A673 (cell line): ENCODE measurements at regions of chr4 and their contacts with region 1.

Region 1: DNA sequence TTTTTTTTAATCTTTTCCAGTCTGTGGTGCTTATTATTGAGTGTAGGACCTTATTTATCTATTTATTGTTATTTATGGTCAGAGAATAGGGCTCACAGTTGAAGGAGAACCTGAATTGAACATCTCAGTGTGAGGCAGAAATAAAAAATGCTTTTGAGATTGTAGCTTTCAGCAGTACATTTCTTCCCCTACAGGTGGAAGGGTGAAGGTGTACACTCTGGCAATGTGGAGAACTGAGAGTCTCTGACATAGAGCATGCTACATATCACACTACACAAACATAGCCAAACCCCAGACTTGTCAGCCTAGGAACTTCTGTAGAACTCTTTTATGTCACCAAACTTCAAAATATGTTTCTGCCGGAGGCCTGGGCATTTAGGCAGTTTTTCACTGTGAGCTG is 140.2 kb downstream of the STIM2 start:
- DNase-seq: no peak
- H3K4me3 ChIP-seq: no peak overlapping the region
- H3K27ac ChIP-seq: no peak overlapping the region
- H3K4me1 ChIP-seq: peaks cover 28% of the 10 kb centered on the region
- H3K27me3 ChIP-seq: no peaks in the 10 kb centered on the region
- CTCF ChIP-seq: peak; percentile 28; the same call in 1 of the 2 replicates

Region 2: GRCh38 chr4:26568446-26568994 is 432.3 kb before region 1 on chr4:
- CTCF ChIA-PET with region 1: no interaction called
- POLR2A ChIA-PET with region 1: no interaction called
- intact Hi-C with region 1: loop called (anchors 10 kb)
- DNase-seq: peak; percentile 96
- H3K4me3 ChIP-seq: no peak overlapping the region
- H3K27ac ChIP-seq: peak overlapping the region; percentile 44
- H3K4me1 ChIP-seq: peaks cover 40% of the 10 kb centered on the region
- H3K27me3 ChIP-seq: no peaks in the 10 kb centered on the region
- CTCF ChIP-seq: no peak

Region 3: GRCh38 chr4:26787461-26788340 is 213.1 kb before region 1 on chr4:
- CTCF ChIA-PET with region 1: no interaction called
- POLR2A ChIA-PET with region 1: no interaction called
- intact Hi-C with region 1: loop called (anchors 5 kb)
- DNase-seq: peak; percentile 85
- H3K4me3 ChIP-seq: no peak overlapping the region
- H3K27ac ChIP-seq: peak overlapping the region; percentile 62
- H3K4me1 ChIP-seq: peaks cover 39% of the 10 kb centered on the region
- H3K27me3 ChIP-seq: no peaks in the 10 kb centered on the region
- CTCF ChIP-seq: peak; percentile 73

Region 4: GRCh38 chr4:26860157-26860921 is 140.5 kb before region 1 on chr4 and contains the start of gene STIM2:
- CTCF ChIA-PET with region 1: no interaction called
- POLR2A ChIA-PET with region 1: no interaction called
- intact Hi-C with region 1: no loop called
- DNase-seq: peak; percentile 99
- H3K4me3 ChIP-seq: peak within 1 kb of the TSS; percentile 85
- H3K27ac ChIP-seq: peak within 1 kb of the TSS; percentile 88
- H3K4me1 ChIP-seq: peaks cover 52% of the 10 kb centered on the region
- H3K27me3 ChIP-seq: no peaks in the 10 kb centered on the region
- CTCF ChIP-seq: peak; percentile 61
- total RNA-seq, gene STIM2: 56.1 and 59.0 TPM in 2 replicates

Region 5: DNA sequence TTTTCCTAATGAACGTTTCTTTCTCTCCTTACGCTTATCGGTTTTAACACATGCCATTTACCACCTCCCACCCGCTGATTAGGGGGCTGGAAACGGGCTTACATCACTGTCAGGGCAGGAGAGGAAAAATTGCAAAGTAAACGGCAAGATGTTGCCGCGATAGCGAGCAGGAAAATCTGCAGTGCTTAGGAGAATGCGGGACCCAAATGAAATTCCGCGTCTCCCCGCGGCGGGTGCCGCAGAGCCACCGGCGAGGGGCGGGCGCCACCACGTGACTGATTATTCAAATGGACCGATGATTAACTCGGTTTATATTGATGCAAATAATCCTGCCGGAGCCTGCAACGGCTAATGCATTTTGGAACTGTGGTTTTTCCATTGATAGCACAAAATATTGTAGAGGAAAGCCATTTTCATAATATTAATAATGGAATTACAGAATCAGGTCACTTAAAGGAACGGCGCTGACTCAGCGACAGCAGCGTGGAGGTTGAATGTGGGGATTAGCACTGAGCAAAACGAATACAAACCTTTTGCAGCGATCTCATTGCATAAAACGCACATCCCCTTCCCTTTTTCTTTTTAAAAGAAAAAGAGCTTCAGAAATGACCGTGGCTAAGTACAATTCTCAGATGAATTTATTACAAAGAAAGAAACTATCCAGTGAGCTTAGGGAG is 84.0 kb after region 1 on chr4:
- CTCF ChIA-PET with region 1: no interaction called
- POLR2A ChIA-PET with region 1: no interaction called
- intact Hi-C with region 1: no loop called
- DNase-seq: peak; percentile 64
- H3K4me3 ChIP-seq: peak overlapping the region; percentile 41
- H3K27ac ChIP-seq: no peak overlapping the region
- H3K4me1 ChIP-seq: no peaks in the 10 kb centered on the region
- H3K27me3 ChIP-seq: peaks cover 15% of the 10 kb centered on the region
- CTCF ChIP-seq: peak; percentile 49

Region 6: DNA sequence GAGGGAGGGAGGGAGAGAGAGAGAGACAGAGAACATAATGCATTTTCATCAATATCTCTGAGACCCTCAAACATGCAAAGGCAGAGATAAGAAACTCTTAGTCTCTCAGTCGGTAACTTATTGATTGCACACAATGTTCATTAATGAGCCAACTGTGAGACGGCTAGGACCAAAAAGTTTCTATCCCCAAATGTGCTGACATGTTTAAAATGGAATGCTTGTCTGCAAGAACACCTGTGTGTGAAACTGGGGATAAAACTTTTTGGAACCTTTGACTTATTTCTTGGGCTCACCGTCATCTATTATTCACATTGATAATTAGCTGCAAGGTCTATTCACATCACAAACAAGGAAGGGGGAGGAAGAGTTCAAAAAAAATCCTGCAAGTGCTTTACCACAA is 337.7 kb after region 1 on chr4:
- CTCF ChIA-PET with region 1: no interaction called
- POLR2A ChIA-PET with region 1: no interaction called
- intact Hi-C with region 1: no loop called
- DNase-seq: no peak
- H3K4me3 ChIP-seq: no peak overlapping the region
- H3K27ac ChIP-seq: no peak overlapping the region
- H3K4me1 ChIP-seq: peaks cover 10% of the 10 kb centered on the region
- H3K27me3 ChIP-seq: no peaks in the 10 kb centered on the region
- CTCF ChIP-seq: no peak

Region 7: GRCh38 chr4:28149813-28150212 is 1149.0 kb after region 1 on chr4:
- CTCF ChIA-PET with region 1: no interaction called
- POLR2A ChIA-PET with region 1: no interaction called
- intact Hi-C with region 1: no loop called
- DNase-seq: no peak
- H3K4me3 ChIP-seq: no peak overlapping the region
- H3K27ac ChIP-seq: no peak overlapping the region
- H3K4me1 ChIP-seq: no peaks in the 10 kb centered on the region
- H3K27me3 ChIP-seq: no peaks in the 10 kb centered on the region
- CTCF ChIP-seq: no peak